ENCODE measurements at regions of chr2 and their contacts with region 1.

Region 1: DNA sequence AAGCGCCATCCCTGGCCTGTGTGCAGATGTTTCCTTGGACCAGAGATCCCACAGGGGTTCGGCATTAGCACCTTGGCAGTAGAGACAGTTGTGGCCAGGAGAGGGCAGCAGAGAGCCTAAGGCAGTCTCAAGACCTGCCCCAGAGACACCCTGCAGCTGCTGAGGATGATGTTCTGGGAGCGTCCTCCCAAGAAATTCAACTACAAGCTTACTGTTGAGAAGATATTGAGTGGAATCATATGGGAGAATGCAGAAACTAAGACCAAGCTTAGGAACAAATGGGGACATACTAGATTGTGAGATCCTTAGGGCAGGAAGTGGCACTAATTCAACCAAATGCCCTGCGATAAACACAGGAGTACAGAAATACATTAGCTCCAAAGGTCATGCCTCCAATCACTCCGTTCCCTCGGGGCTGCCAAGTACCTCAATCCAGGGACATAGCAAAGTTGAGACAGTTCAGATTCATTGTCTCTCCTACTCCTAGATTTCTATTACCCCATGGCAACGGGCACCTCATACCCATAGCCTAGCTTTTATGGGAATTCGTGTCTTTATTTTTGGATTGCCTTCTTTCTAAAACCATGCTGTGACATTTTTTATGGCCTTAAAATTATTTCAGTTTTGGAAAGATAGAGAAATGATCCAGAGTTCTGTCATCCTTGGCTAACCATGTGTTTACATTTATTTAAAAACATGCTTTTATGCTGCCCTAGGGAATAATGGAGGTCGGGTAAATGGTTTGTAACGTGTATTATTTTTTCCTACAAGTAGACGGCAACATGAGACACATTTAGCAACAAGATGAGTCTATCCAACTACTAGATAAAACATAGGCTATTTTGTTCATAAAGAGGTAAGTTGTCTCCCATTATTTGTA is 2.2 kb upstream of the ERMN start:
- DNase-seq: peak; percentile 68
- ATAC-seq: peak; percentile 99
- H3K4me3 ChIP-seq: no peak overlapping the region
- H3K27ac ChIP-seq: no peak overlapping the region
- H3K4me1 ChIP-seq: no peaks in the 10 kb centered on the region
- H3K27me3 ChIP-seq: no peaks in the 10 kb centered on the region
- CTCF ChIP-seq: peak; percentile 88 to 97 (median 96)
- EP300 ChIP-seq: no peak
- POLR2A ChIP-seq: no peak
- RAD21 ChIP-seq: peak; percentile 88

Region 2: DNA sequence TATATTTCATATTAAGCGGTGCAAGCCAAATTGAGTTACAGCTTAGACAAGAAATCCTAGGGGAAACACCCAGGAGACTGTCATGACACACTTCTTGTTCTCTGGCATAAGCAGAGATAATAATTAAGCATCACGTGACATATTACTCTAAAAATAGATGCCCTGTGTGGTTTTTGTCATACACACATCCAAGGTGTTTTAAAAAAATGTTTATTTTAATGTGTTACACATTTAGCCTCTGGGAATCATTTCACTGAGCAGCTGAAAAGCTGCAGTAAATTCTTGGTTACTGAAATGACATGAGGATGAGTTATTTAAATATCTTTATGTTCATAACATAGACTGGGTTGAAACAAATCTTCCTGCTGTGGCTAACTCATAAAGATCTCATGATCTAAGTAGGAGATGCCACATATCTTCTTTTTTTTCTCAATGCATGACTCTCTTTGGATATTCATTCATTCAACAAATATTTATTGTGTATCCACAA is 35.8 kb after region 1 on chr2:
- CTCF ChIA-PET with region 1: interaction called, 70 read pairs
- POLR2A ChIA-PET with region 1: interaction called, 4 read pairs
- RAD21 ChIA-PET with region 1: interaction called, 11 read pairs
- SMC1A ChIA-PET with region 1: interaction called, 8 read pairs
- in situ Hi-C with region 1: no loop called
- intact Hi-C with region 1: no loop called
- DNase-seq: peak; percentile 50
- ATAC-seq: peak; percentile 72
- H3K4me3 ChIP-seq: no peak overlapping the region
- H3K27ac ChIP-seq: peak overlapping the region; percentile 56
- H3K4me1 ChIP-seq: peaks cover 14% of the 10 kb centered on the region
- H3K27me3 ChIP-seq: no peaks in the 10 kb centered on the region
- CTCF ChIP-seq: no peak
- EP300 ChIP-seq: no peak
- POLR2A ChIP-seq: no peak
- RAD21 ChIP-seq: no peak

Region 3: DNA sequence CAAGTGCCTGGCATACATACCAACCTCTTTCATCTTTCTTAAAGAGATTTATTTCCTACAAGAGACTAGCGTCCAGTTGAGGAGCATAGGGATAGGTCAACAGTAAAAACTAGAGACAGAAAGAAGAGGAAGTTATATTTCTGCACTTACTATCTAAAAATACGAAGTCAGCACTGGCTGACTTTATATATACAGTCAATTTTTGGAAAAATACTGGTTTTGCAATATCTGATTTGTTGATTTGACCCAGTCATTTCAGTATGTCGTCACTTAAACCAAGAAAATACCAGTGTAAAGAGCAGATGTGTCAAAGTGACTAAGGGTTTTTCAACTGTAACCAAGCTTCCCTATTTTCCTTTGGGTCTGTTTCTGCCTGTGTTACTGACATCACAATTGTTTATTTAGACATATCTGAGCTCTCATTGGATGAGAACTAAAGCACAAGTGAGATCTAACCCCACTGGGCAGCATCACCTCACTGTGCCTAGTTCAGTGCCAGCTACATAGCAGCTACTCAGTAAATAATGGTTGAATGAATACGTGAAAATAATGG is 93.0 kb after region 1 on chr2:
- CTCF ChIA-PET with region 1: interaction called, 56 read pairs
- POLR2A ChIA-PET with region 1: no interaction called
- RAD21 ChIA-PET with region 1: interaction called, 26 read pairs
- SMC1A ChIA-PET with region 1: interaction called, 28 read pairs
- in situ Hi-C with region 1: no loop called
- intact Hi-C with region 1: no loop called
- DNase-seq: no peak
- ATAC-seq: peak; percentile 74
- H3K4me3 ChIP-seq: no peak overlapping the region
- H3K27ac ChIP-seq: peak overlapping the region; percentile 60
- H3K4me1 ChIP-seq: peaks cover 34% of the 10 kb centered on the region
- H3K27me3 ChIP-seq: no peaks in the 10 kb centered on the region
- CTCF ChIP-seq: no peak
- EP300 ChIP-seq: peak in 1 of 2 experiments; percentile 73; a peak in 2 of 4 replicates
- POLR2A ChIP-seq: no peak
- RAD21 ChIP-seq: no peak

Region 4: DNA sequence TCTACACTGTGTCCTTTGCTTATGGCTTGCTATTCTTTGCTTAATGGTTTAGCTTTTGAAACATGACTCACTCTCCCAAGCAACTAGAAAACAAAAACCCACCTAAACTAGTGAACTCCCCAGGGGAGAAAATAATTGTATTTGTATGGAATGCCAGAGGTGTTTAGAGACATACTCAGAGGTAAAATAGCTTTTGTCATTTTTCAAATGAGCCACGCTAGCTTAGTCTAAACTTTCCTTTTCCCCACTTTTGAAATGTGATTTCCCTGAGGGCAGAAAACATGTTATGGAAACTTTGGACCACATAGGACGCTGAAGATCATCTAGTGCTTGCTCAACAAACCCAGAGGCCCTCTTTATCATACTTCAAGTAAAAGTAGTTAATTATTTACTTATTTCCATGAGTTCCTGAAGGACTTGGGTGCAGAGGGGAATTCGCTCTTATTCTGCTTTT is 132.6 kb after region 1 on chr2:
- CTCF ChIA-PET with region 1: interaction called, 79 read pairs
- POLR2A ChIA-PET with region 1: no interaction called
- RAD21 ChIA-PET with region 1: interaction called, 22 read pairs
- SMC1A ChIA-PET with region 1: interaction called, 45 read pairs
- in situ Hi-C with region 1: no loop called
- intact Hi-C with region 1: no loop called
- DNase-seq: no peak
- ATAC-seq: no peak
- H3K4me3 ChIP-seq: no peak overlapping the region
- H3K27ac ChIP-seq: no peak overlapping the region
- H3K4me1 ChIP-seq: no peaks in the 10 kb centered on the region
- H3K27me3 ChIP-seq: no peaks in the 10 kb centered on the region
- CTCF ChIP-seq: no peak
- EP300 ChIP-seq: no peak
- POLR2A ChIP-seq: no peak
- RAD21 ChIP-seq: no peak

Region 5: GRCh38 chr2:157492189-157492773 is 164.4 kb after region 1 on chr2:
- CTCF ChIA-PET with region 1: interaction called, 165 read pairs
- POLR2A ChIA-PET with region 1: no interaction called
- RAD21 ChIA-PET with region 1: interaction called, 44 read pairs
- SMC1A ChIA-PET with region 1: interaction called, 165 read pairs
- in situ Hi-C with region 1: loop called (anchors 5 kb)
- intact Hi-C with region 1: loop called (anchors 2 kb)
- DNase-seq: peak; percentile 43
- ATAC-seq: peak; percentile 98
- H3K4me3 ChIP-seq: no peak overlapping the region
- H3K27ac ChIP-seq: no peak overlapping the region
- H3K4me1 ChIP-seq: no peaks in the 10 kb centered on the region
- H3K27me3 ChIP-seq: no peaks in the 10 kb centered on the region
- CTCF ChIP-seq: peak; percentile 79 to 93 (median 82); a peak in 5 of 6 replicates
- EP300 ChIP-seq: no peak
- POLR2A ChIP-seq: no peak
- RAD21 ChIP-seq: peak; percentile 89

Measured in GM12878 (cell line).